ENCODE measurements at regions of chr5 and their contacts with region 1.

Region 1: GRCh38 chr5:180233729-180234128 is 24.7 kb upstream of the RASGEF1C start:
- DNase-seq: no peak
- ATAC-seq: no peak
- H3K4me3 ChIP-seq: no peak overlapping the region
- H3K27ac ChIP-seq: no peak overlapping the region; the same call in 1 of the 2 replicates
- H3K4me1 ChIP-seq: no peaks in the 10 kb centered on the region
- H3K27me3 ChIP-seq: no peaks in the 10 kb centered on the region
- CTCF ChIP-seq: no peak
- POLR2A ChIP-seq: no peak
- RAD21 ChIP-seq: no peak

Region 2: GRCh38 chr5:178602752-178603151 is 1631.0 kb before region 1 on chr5:
- CTCF ChIA-PET with region 1: no interaction called
- POLR2A ChIA-PET with region 1: no interaction called
- dilution Hi-C with region 1: no loop called
- in situ Hi-C with region 1: no loop called
- intact Hi-C with region 1: loop called (anchors 5 kb)
- DNase-seq: peak; percentile 72
- ATAC-seq: peak; percentile 56
- H3K4me3 ChIP-seq: no peak overlapping the region
- H3K27ac ChIP-seq: no peak overlapping the region
- H3K4me1 ChIP-seq: peaks cover 2% of the 10 kb centered on the region; the same call in 1 of the 2 replicates
- H3K27me3 ChIP-seq: no peaks in the 10 kb centered on the region
- CTCF ChIP-seq: no peak
- POLR2A ChIP-seq: no peak
- RAD21 ChIP-seq: no peak

Region 3: DNA sequence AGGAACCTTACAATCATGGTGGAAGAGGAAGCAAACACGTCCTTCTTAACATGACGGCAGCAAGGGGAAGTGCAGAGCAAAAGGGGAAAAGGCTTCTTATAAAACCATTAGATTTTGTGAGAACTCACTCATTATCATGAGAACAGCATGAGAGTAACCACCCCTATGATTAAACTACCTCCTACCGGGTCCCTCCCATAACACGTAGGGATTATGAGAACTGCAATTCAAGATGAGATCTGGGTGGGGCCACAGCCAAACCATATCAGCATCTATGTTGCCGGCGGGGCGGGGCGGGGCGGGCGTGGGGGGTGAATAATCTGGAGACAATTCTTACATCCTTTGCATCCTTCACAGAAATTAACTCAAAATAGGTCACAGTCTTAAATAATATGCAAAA is 178.2 kb after region 1 on chr5:
- CTCF ChIA-PET with region 1: no interaction called
- POLR2A ChIA-PET with region 1: no interaction called
- dilution Hi-C with region 1: no loop called
- in situ Hi-C with region 1: no loop called
- intact Hi-C with region 1: no loop called
- DNase-seq: no peak
- ATAC-seq: no peak
- H3K4me3 ChIP-seq: no peak overlapping the region
- H3K27ac ChIP-seq: no peak overlapping the region
- H3K4me1 ChIP-seq: no peaks in the 10 kb centered on the region
- H3K27me3 ChIP-seq: no peaks in the 10 kb centered on the region
- CTCF ChIP-seq: no peak
- POLR2A ChIP-seq: no peak
- RAD21 ChIP-seq: no peak

Measured in IMR-90 (cell line).